CD8-positive, alpha-beta memory T cell (primary cell): ENCODE measurements at regions of chr16 and their contacts with region 1.

Region 1: GRCh38 chr16:30395155-30395991 is at the start of gene ZNF48:
- DNase-seq: peak; percentile 37 to 64 (median 58)
- H3K4me3 ChIP-seq: peak within 1 kb of the TSS; percentile 60
- H3K4me3 Mint-ChIP-seq: peak within 1 kb of the TSS; percentile 72 to 93 (median 89)
- H3K27ac ChIP-seq: peak within 1 kb of the TSS; percentile 52
- H3K27ac Mint-ChIP-seq: peak within 1 kb of the TSS; percentile 44 to 98 (median 86)
- H3K4me1 ChIP-seq: peaks cover 25% of the 10 kb centered on the region
- H3K4me1 Mint-ChIP-seq: peaks cover 30 to 48% (median 33%) of the 10 kb centered on the region in 3 donors
- H3K27me3 ChIP-seq: no peaks in the 10 kb centered on the region
- H3K27me3 Mint-ChIP-seq: no peaks in the 10 kb centered on the region
- total RNA-seq, gene ZNF48: 18.4 to 19.3 TPM

Region 2: DNA sequence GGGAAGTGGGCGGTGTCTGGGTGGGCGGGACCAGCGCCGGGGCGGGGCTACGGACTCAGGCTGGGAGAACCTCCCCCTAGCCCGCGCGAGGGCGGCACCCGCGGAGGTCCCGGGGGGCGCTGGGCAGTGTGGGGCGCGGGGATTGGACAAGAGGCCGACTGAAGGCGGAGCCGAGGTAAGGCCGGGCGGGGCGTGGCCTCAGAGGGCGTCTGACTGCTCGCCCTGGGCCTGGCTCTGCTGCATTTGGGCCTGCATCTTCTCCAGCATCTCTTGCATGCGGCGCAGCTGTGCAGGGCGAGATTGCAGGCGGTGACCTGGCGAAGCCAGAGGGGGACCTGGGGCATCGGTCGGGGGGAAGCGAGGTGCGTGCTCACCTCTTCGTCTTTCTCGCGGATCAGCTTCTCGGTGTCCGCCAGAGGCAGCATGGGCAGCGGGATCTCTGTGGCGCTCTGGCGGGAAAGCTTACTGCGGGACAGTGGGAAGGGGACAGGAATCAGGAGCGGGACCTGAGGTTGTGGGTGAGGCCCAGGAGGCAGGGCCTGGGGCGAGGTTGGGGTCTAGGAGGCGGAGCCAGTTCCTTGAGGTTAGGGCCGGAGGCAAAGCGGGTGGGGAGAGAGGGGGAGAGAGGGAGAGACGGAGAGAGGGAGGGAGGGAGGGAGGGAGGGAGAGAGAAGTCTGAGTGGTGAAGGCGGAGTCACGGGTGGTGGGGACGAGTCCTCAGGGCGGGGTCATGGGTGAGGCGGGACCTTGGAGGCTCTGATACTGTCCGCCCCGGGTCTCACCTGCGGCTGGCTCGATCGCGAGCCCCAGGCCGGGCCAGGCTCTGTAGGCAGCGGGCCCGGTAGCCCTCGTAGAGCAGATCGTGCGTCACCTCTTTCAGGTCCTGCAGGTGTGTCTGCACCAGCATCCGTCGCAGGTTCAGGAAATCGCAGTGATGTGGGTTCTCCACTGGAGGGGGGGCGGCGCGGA is 16.9 kb before region 1 on chr16:
- CTCF ChIA-PET with region 1: interaction called, 16 read pairs
- POLR2A ChIA-PET with region 1: interaction called, 24 read pairs
- DNase-seq: peak; percentile 99 to 100 (median 99)
- H3K4me3 ChIP-seq: peak overlapping the region; percentile 99
- H3K4me3 Mint-ChIP-seq: peak overlapping the region; percentile 92 to 100 (median 96)
- H3K27ac ChIP-seq: peak overlapping the region; percentile 99
- H3K27ac Mint-ChIP-seq: peak overlapping the region; percentile 99 to 100 (median 100)
- H3K4me1 ChIP-seq: peaks cover 64% of the 10 kb centered on the region
- H3K4me1 Mint-ChIP-seq: peaks cover 55 to 63% (median 55%) of the 10 kb centered on the region in 3 donors
- H3K27me3 ChIP-seq: no peaks in the 10 kb centered on the region
- H3K27me3 Mint-ChIP-seq: peaks cover 0 to 2% of the 10 kb centered on the region in 2 donors